ENCODE measurements at regions of chr15 and their contacts with region 1.

Region 1: DNA sequence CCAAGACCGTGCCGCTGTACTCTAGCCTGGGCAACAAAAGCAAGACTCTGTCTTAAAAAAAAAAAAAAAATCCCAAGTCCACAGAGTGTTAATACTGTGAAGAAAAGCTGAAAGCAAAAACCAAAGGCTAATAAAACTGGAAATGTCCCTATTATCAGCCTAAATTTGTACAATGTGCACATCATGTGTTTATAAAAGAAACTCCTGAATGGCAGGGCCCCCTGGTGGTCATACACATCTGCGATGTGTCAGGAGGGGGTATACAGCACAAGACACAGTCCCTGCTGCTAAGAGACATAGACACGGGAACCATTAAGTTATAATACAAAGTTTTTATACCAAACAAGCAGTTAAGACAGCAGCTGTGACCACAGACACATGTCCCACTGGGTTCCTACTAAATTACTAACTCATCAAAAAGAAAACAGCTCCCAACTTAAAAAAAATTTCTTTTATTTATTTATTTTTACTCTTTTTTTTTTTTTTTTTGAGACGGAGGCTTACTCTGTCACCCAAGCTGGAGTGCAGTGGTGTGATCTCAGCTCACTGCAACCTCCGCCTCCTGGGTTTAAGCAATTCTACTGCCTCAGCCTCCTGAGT is 31.0 kb downstream of the IDH2 start:
- DNase-seq: peak; percentile 86
- ATAC-seq: peak; percentile 87
- H3K4me3 Mint-ChIP-seq: no peak overlapping the region
- H3K27ac Mint-ChIP-seq: no peak overlapping the region
- H3K4me1 Mint-ChIP-seq: peaks cover 5% of the 10 kb centered on the region
- H3K27me3 Mint-ChIP-seq: no peaks in the 10 kb centered on the region

Region 2: DNA sequence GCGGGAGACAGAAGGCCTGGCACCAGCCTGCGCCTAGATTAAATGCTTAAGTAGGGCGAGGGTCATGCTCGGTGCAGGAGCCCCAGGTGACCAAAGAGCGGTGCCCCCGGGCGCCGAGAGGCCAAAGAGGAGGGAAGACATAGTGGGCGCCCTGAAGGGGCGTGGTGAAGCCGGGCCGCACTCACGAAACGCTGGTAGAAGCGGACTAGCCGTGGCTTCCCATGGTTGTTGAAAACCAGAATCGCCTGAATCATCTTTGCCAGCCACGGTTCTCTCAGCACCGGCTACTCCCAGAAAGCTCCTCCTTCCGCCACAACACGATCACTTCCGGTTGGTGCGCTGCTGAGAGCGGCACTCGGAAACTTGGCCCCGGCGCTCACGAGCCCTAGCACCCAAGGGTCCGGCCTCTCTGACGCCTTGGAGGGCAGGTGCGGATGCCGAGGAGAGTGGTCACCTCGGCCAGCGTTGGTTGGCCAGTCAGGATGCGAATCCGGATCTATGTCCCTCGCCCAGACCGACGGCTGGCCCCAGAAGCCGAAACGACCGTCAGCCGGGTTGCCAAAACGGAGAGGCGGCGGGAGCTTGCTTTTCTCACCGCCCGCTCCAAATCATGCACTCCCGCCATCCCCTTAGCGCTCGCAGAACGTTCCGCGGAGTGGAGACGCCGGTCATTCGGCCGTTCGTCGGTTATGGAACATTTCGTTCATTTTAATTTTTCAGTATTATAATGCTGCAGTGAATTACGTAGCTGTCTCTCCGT is 177.4 kb before region 1 on chr15 and contains the start of gene AP3S2:
- CTCF ChIA-PET with region 1: interaction called, 35 read pairs
- DNase-seq: peak; percentile 94
- ATAC-seq: peak; percentile 97
- H3K4me3 Mint-ChIP-seq: peak within 1 kb of the TSS; percentile 100
- H3K27ac Mint-ChIP-seq: peak within 1 kb of the TSS; percentile 95
- H3K4me1 Mint-ChIP-seq: peaks cover 33% of the 10 kb centered on the region
- H3K27me3 Mint-ChIP-seq: peaks cover 2% of the 10 kb centered on the region
- total RNA-seq, gene AP3S2: 22.2 to 26.5 TPM

Region 3: DNA sequence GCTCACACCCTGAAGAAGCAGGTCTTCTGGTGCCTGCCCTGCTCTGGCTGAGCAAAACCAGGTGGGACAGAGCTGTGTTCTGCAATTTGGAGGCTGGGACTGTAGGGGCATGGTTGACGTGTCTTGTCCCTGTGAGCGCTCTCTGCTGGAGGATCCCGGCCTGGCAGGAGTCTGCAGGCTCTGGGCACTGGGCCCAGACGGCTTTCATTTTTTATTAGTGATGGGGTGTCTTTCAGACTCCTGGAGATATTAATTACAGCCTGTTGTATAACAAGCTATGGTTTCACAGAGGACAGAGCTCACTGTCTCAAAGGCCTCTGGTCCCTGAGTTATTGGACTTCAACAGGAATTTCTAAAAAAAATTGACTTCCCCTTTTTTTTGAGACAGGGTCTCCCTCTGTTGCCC is 99.7 kb before region 1 on chr15:
- CTCF ChIA-PET with region 1: interaction called, 13 read pairs
- DNase-seq: peak; percentile 69
- ATAC-seq: peak; percentile 90
- H3K4me3 Mint-ChIP-seq: no peak overlapping the region
- H3K27ac Mint-ChIP-seq: no peak overlapping the region
- H3K4me1 Mint-ChIP-seq: peaks cover 2% of the 10 kb centered on the region
- H3K27me3 Mint-ChIP-seq: peaks cover 9% of the 10 kb centered on the region

Measured in activated CD8-positive, alpha-beta memory T cell treated with anti-CD3 and anti-CD28 coated beads, Interleukin-2, amount 10 ng/mL, durations not matched to agents 7 days and 5 days (primary cell).